Colonic mucosa (tissue), 4 donors: ENCODE measurements at regions of chr19 and their contacts with region 1.

Region 1: DNA sequence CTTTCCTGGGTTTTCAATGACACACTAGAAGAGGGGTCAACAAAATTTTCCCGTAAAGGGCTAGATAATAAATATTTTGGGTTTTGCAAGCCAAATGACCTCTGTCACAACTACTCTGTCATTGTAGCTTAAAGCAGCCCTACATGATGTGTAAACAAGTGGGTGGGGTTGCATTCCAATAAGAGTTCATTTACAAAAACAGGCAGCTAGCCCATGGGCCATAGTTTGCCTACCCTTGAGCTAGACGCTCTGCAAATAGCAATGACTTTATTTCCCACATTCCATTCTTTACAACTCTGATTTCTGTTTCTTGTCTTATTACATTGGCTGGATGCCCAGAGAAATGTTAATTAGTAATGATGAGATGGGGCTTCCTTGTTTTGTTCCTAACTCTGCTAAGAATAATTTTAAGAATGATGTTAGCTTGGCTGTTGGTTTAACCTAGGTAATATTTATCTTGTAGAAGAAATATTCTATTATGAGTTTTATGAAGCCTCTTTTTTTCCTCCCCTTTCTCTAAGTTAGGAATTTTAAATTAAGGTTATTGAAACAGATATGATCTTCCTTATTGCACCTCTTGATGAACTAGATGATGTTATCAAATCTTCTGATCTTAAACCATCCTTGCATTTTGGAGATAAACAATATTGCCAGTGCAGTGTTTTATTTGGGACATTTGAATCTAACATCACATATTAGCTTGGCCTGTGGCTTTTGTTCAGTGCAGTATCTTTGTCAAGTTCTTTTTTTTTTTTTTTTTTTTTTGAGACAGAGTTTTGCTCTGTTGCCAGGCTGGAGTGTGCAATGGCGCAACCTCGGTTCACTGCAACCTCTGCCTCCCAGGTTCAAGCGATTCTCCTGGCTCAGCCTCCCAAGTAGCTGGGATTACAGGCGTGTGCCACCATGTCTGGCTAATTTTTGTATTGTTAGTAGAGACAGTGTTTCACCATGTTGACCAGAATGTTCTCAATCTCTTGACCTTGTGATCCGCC is 76.3 kb downstream of the ZNF557 start:
- DNase-seq: no peak
- H3K4me3 ChIP-seq: no peak overlapping the region
- H3K27ac ChIP-seq: no peak overlapping the region
- H3K4me1 ChIP-seq: peaks cover 5% of the 10 kb centered on the region
- H3K27me3 ChIP-seq: no peaks in the 10 kb centered on the region
- CTCF ChIP-seq: no peak

Region 2: DNA sequence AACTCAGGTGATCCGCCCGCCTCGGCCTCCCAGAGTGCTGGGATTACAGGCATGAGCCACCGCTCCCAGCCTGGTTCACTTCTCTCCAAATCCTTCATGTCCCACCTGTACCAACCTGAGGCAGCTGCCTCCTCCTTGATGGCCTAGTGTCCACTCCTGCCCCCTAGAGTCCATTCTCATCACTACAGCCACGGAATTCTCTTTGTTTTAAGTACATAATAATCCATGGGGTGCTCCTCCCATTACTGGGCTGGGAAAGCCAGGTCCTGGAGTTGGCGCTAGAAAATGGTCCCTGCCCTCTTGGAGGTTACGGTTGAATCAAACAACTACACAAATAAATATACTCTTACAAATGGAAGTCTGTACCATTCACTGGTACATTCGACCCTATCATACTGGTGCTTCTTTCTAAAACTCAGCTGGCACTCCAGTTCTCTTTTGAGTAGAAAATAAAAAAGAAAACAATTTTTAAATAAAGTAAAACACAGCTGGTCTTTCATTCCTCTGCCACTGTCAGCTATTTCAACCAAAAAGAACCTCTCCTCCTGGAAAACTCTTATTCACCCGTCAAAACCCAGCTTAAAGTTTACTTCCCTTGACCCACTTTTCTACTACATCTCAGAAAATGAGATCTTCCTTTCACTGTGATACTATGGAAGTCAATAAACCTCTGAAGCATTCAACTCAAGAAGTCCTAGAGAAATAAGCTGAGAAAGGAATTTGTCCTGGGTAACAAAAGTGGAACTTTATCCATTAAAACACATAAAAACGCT is 180.5 kb after region 1 on chr19:
- intact Hi-C with region 1: loop called (anchors 5 kb)
- DNase-seq: peak; percentile 79
- H3K4me3 ChIP-seq: no peak overlapping the region
- H3K27ac ChIP-seq: no peak overlapping the region
- H3K4me1 ChIP-seq: no peaks in the 10 kb centered on the region
- H3K27me3 ChIP-seq: no peaks in the 10 kb centered on the region
- CTCF ChIP-seq: peak; percentile 38

Region 3: GRCh38 chr19:7340959-7341837 is 195.4 kb after region 1 on chr19:
- intact Hi-C with region 1: loop called (anchors 5 kb)
- DNase-seq: peak; percentile 89
- H3K4me3 ChIP-seq: no peak overlapping the region
- H3K27ac ChIP-seq: no peak overlapping the region
- H3K4me1 ChIP-seq: no peaks in the 10 kb centered on the region
- H3K27me3 ChIP-seq: no peaks in the 10 kb centered on the region
- CTCF ChIP-seq: peak; percentile 93